ENCODE measurements at regions of chr16 and their contacts with region 1.

Region 1: DNA sequence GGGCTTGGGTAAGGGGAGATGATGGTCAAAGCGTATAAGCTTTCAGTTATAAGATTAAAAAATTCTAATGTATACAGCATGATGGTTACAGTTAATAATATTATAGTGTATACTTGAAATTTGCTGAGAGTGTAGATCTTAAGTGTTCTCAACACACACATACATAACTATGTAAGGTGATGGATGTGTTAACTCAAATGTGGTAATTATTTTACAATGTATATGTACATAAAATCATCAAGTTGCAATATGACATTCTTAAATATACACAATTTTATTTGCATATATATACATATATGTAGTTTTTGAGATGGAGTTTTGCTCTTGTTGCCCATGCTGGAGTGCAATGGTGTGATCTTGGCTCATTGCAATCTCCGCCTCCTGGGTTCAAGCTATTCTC is 7.2 kb downstream of the ZKSCAN2 start:
- DNase-seq: no peak
- ATAC-seq: no peak
- H3K4me3 ChIP-seq: no peak overlapping the region
- H3K27ac ChIP-seq: no peak overlapping the region
- H3K4me1 ChIP-seq: no peaks in the 10 kb centered on the region
- CTCF ChIP-seq: no peak
- EP300 ChIP-seq: no peak
- POLR2A ChIP-seq: no peak
- RAD21 ChIP-seq: no peak

Region 2: GRCh38 chr16:25235991-25236390 is 14.5 kb before region 1 on chr16:
- CTCF ChIA-PET with region 1: interaction called, 11 read pairs
- POLR2A ChIA-PET with region 1: no interaction called
- DNase-seq: no peak
- ATAC-seq: no peak
- H3K4me3 ChIP-seq: no peak overlapping the region
- H3K27ac ChIP-seq: no peak overlapping the region
- H3K4me1 ChIP-seq: no peaks in the 10 kb centered on the region
- CTCF ChIP-seq: no peak
- EP300 ChIP-seq: no peak
- POLR2A ChIP-seq: no peak
- RAD21 ChIP-seq: no peak

Region 3: DNA sequence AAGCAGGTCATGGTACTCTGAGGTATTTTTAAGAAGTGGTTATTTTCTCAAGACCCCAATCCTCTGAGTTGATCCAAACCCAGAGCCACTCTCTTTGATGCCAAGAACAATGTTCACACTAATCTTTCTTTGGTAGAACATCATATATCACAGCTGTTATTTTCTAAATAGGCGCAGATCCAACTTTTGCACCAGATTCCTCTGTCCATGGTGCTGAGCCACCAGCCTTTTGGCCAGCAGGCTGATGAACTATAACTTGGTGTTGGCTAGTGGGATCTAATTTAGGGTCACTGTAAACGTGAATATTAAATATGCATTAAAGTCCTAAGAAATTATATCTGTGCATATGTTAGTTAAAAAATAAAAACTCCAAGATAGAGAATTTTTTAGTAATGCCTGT is 14.1 kb after region 1 on chr16:
- CTCF ChIA-PET with region 1: no interaction called
- POLR2A ChIA-PET with region 1: no interaction called
- DNase-seq: no peak
- ATAC-seq: no peak
- H3K4me3 ChIP-seq: no peak overlapping the region
- H3K27ac ChIP-seq: no peak overlapping the region
- H3K4me1 ChIP-seq: no peaks in the 10 kb centered on the region; the same call in 2 of the 3 replicates
- CTCF ChIP-seq: no peak
- EP300 ChIP-seq: no peak
- POLR2A ChIP-seq: no peak
- RAD21 ChIP-seq: no peak

Region 4: GRCh38 chr16:25291580-25291979 is 41.1 kb after region 1 on chr16:
- CTCF ChIA-PET with region 1: no interaction called
- POLR2A ChIA-PET with region 1: no interaction called
- DNase-seq: no peak
- ATAC-seq: no peak
- H3K4me3 ChIP-seq: no peak overlapping the region
- H3K27ac ChIP-seq: no peak overlapping the region
- H3K4me1 ChIP-seq: no peaks in the 10 kb centered on the region
- CTCF ChIP-seq: no peak
- EP300 ChIP-seq: no peak
- POLR2A ChIP-seq: no peak
- RAD21 ChIP-seq: no peak

Measured in A549 (cell line).